CD4-positive, alpha-beta T cell (primary cell): ENCODE measurements at regions of chr6 and their contacts with region 1.

Region 1: GRCh38 chr6:26216356-26216885 is 129.2 kb downstream of the HFE start:
- DNase-seq: peak; percentile 52 to 98 (median 71)
- ATAC-seq: peak; percentile 80
- H3K4me3 ChIP-seq: peak overlapping the region; percentile 76
- H3K4me3 Mint-ChIP-seq: no peak overlapping the region
- H3K27ac ChIP-seq: peak overlapping the region; percentile 87 to 88
- H3K27ac Mint-ChIP-seq: no peak overlapping the region
- H3K4me1 ChIP-seq: peaks cover 33% of the 10 kb centered on the region
- H3K4me1 Mint-ChIP-seq: no peaks in the 10 kb centered on the region
- H3K27me3 ChIP-seq: no peaks in the 10 kb centered on the region
- H3K27me3 Mint-ChIP-seq: no peaks in the 10 kb centered on the region
- CTCF ChIP-seq: no peak

Region 2: DNA sequence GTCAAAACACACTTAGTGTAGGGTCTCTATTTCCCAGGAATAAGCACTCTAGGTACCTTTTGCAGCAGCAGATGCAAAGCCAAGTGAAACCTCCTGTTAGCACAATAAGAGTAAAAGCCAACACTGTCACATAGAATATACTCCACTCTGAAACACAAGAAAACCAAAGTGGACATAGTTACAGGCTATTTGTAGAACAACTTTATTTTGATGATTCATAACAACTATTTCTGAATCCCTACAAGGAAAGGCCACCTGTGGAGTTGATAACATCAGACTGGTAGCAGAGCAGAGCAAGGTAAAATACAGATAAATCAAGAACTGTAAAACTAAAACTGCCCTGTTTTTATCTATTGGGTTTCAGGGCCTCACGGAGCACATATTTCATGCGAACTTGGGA is 1661.9 kb before region 1 on chr6:
- CTCF ChIA-PET with region 1: no interaction called
- POLR2A ChIA-PET with region 1: no interaction called
- intact Hi-C with region 1: no loop called
- DNase-seq: no peak
- ATAC-seq: no peak
- H3K4me3 ChIP-seq: no peak overlapping the region
- H3K4me3 Mint-ChIP-seq: no peak overlapping the region
- H3K27ac ChIP-seq: no peak overlapping the region
- H3K27ac Mint-ChIP-seq: no peak overlapping the region
- H3K4me1 ChIP-seq: no peaks in the 10 kb centered on the region
- H3K4me1 Mint-ChIP-seq: no peaks in the 10 kb centered on the region
- H3K27me3 ChIP-seq: no peaks in the 10 kb centered on the region
- H3K27me3 Mint-ChIP-seq: no peaks in the 10 kb centered on the region
- CTCF ChIP-seq: no peak

Region 3: DNA sequence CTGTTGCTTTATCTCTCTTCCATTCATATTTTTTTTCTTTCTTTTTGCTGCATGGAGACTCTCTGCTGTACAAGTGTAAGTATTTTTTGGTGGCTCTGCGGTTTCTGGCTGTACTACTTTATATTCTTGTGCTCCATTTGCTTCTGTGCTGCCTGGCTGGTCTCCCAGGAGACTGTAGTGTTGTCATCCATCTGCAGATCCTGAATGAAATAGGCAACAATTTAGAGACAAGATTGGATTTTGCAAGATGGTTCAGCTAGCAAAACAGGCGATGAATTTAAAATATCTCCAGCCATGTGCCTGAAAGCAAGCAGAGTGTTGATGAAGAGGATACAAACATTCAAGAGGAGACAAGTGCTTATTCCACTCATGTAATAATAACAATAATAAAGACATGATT is 639.5 kb before region 1 on chr6:
- CTCF ChIA-PET with region 1: no interaction called
- POLR2A ChIA-PET with region 1: no interaction called
- intact Hi-C with region 1: no loop called
- DNase-seq: no peak
- ATAC-seq: no peak
- H3K4me3 ChIP-seq: no peak overlapping the region
- H3K4me3 Mint-ChIP-seq: no peak overlapping the region
- H3K27ac ChIP-seq: no peak overlapping the region
- H3K27ac Mint-ChIP-seq: no peak overlapping the region
- H3K4me1 ChIP-seq: peaks cover 5% of the 10 kb centered on the region
- H3K4me1 Mint-ChIP-seq: peaks cover 10% of the 10 kb centered on the region
- H3K27me3 ChIP-seq: no peaks in the 10 kb centered on the region
- H3K27me3 Mint-ChIP-seq: no peaks in the 10 kb centered on the region
- CTCF ChIP-seq: no peak

Region 4: GRCh38 chr6:26025894-26026832 is 190.3 kb before region 1 on chr6:
- CTCF ChIA-PET with region 1: no interaction called
- POLR2A ChIA-PET with region 1: interaction called, 44 read pairs
- intact Hi-C with region 1: no loop called
- DNase-seq: peak; percentile 75 to 98 (median 88)
- ATAC-seq: peak; percentile 45
- H3K4me3 ChIP-seq: peak overlapping the region; percentile 70
- H3K4me3 Mint-ChIP-seq: peak overlapping the region; percentile 90
- H3K27ac ChIP-seq: peak overlapping the region; percentile 86 to 88
- H3K27ac Mint-ChIP-seq: peak overlapping the region; percentile 97
- H3K4me1 ChIP-seq: peaks cover 34% of the 10 kb centered on the region
- H3K4me1 Mint-ChIP-seq: peaks cover 42% of the 10 kb centered on the region
- H3K27me3 ChIP-seq: no peaks in the 10 kb centered on the region
- H3K27me3 Mint-ChIP-seq: no peaks in the 10 kb centered on the region
- CTCF ChIP-seq: peak; percentile 86

Region 5: GRCh38 chr6:26122793-26123674 is 93.4 kb before region 1 on chr6:
- CTCF ChIA-PET with region 1: interaction called, 3 read pairs
- POLR2A ChIA-PET with region 1: interaction called, 306 read pairs
- intact Hi-C with region 1: loop called in 1 of 2 experiments (anchors 1 kb)
- DNase-seq: peak; percentile 75 to 98 (median 92)
- ATAC-seq: peak; percentile 56
- H3K4me3 ChIP-seq: peak overlapping the region; percentile 88
- H3K4me3 Mint-ChIP-seq: peak overlapping the region; percentile 97
- H3K27ac ChIP-seq: peak overlapping the region; percentile 84 to 95
- H3K27ac Mint-ChIP-seq: peak overlapping the region; percentile 98
- H3K4me1 ChIP-seq: peaks cover 23% of the 10 kb centered on the region
- H3K4me1 Mint-ChIP-seq: peaks cover 41% of the 10 kb centered on the region
- H3K27me3 ChIP-seq: no peaks in the 10 kb centered on the region
- H3K27me3 Mint-ChIP-seq: peaks cover 13% of the 10 kb centered on the region
- CTCF ChIP-seq: no peak

Region 6: DNA sequence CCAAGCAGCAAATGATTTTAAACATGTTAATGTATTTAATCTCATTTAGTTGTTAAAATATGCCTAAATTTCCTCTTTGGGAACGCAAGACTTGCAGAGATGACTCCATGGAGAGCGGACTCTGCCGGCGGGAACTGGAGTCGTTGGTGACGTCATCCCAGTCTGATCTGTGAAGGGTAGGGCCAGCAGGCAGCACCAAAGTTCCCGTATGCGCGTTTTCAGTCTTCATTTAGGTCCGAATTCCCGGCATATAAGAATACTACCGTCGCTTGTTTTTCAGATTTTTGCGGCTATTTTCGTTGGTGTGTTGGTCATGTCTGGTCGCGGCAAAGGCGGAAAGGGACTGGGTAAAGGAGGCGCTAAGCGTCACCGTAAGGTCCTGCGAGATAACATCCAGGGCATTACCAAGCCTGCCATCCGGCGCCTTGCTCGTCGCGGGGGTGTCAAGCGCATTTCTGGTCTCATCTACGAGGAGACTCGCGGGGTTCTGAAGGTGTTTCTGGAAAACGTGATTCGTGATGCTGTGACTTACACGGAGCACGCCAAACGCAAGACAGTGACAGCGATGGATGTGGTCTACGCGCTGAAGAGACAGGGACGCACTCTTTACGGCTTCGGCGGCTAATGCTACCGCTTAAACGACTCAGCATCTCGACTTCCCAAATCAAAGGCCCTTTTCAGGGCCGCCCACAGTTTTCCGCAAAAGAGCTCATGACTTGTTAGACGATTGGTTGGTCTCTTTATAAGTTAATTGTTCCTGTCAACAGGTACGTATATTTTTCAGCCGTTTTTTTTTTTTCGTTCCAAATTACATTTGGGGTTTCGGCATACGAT is 11.9 kb before region 1 on chr6:
- CTCF ChIA-PET with region 1: interaction called, 28 read pairs
- POLR2A ChIA-PET with region 1: interaction called, 1,838 read pairs
- intact Hi-C with region 1: loop called (anchors 1 kb)
- DNase-seq: peak; percentile 73 to 98 (median 80)
- ATAC-seq: peak; percentile 69
- H3K4me3 ChIP-seq: peak overlapping the region; percentile 68
- H3K4me3 Mint-ChIP-seq: no peak overlapping the region
- H3K27ac ChIP-seq: peak overlapping the region; percentile 89 to 90
- H3K27ac Mint-ChIP-seq: no peak overlapping the region
- H3K4me1 ChIP-seq: peaks cover 34% of the 10 kb centered on the region
- H3K4me1 Mint-ChIP-seq: peaks cover 8% of the 10 kb centered on the region
- H3K27me3 ChIP-seq: no peaks in the 10 kb centered on the region
- H3K27me3 Mint-ChIP-seq: no peaks in the 10 kb centered on the region
- CTCF ChIP-seq: peak; percentile 32

Region 7: DNA sequence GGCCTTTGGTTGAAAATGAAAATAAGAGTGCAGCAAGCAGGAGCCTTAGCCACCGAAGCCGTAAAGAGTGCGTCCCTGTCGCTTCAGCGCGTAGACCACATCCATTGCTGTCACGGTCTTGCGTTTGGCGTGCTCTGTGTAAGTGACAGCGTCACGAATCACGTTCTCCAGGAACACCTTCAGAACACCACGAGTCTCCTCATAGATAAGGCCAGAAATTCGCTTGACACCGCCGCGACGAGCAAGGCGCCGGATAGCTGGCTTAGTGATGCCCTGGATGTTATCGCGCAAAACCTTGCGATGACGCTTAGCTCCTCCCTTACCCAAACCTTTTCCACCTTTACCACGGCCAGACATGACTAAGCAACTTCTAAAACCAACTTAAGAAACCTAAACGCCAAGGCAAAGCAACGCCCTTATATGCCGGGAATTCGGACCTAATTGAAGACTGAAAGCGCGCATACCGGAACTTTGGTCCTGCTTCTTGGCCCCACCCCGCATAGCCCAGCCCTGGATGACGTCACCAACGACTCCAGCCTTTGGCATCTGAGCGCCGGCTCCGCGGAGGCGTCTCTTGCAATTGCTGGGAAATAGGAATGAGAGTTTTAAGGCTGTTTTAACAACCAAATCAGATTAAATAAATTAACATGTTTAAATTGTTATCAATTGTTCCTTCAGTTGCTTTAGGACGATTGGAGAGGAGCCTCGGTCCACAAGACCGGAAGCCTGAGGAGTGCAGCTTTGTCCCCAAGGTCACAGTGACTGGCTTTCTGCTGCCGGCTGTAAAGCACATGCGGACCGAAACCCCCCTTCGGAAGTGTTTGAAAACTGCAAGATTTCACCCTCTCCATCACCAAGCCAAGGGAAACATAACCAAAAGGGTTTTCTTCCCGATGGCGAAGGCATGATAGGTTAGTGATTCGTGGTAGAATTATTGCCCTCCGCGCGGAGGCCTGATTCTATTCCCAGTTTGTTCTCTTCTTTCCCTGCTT is 69.0 kb after region 1 on chr6:
- CTCF ChIA-PET with region 1: interaction called, 3 read pairs
- POLR2A ChIA-PET with region 1: interaction called, 137 read pairs
- intact Hi-C with region 1: loop called in 1 of 2 experiments (anchors 2 kb)
- DNase-seq: peak; percentile 85 to 99 (median 92)
- ATAC-seq: peak; percentile 82
- H3K4me3 ChIP-seq: peak overlapping the region; percentile 62
- H3K4me3 Mint-ChIP-seq: peak overlapping the region; percentile 87
- H3K27ac ChIP-seq: peak overlapping the region; percentile 82 to 85
- H3K27ac Mint-ChIP-seq: peak overlapping the region; percentile 96
- H3K4me1 ChIP-seq: peaks cover 16% of the 10 kb centered on the region
- H3K4me1 Mint-ChIP-seq: peaks cover 24% of the 10 kb centered on the region
- H3K27me3 ChIP-seq: no peaks in the 10 kb centered on the region
- H3K27me3 Mint-ChIP-seq: peaks cover 11% of the 10 kb centered on the region
- CTCF ChIP-seq: no peak

Region 8: DNA sequence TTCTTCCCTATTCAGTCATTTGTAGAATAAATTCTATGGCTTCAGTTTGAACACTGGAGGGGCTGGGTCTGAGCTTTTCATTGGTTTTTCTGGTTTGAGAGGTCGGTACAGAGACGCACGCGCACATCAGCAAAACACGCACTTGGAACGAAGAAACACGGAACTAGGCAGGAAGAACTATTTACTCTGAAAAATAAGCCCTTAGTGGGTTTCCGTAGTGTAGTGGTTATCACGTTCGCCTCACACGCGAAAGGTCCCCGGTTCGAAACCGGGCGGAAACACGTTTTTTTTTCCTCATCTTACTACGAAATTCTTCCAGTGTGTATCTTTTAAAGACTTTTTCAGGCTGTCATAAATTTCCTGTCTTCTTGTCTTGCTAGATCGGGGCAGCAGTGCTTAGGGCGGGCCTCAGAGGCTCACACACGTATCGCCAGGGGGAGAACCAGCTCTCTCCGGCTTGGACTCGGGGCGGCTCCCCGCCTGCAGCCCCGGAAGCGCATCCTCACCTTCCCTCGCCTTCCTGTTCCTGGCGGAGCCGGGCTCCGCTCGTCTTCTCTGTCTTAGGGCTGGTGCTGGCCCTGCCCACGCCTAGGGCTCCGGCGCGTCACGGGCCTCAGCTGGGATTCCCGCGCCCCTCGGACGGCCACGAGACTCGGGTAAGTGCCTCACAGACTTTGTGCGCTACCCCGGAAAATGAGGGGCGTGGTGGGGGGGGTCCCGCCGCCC is 321.6 kb after region 1 on chr6 and contains the start of gene HMGN4:
- CTCF ChIA-PET with region 1: no interaction called
- POLR2A ChIA-PET with region 1: interaction called, 16 read pairs
- intact Hi-C with region 1: no loop called
- DNase-seq: peak; percentile 66 to 97 (median 76)
- ATAC-seq: peak; percentile 70
- H3K4me3 ChIP-seq: peak within 1 kb of the TSS; percentile 93
- H3K4me3 Mint-ChIP-seq: peak within 1 kb of the TSS; percentile 94
- H3K27ac ChIP-seq: peak within 1 kb of the TSS; percentile 84 to 91
- H3K27ac Mint-ChIP-seq: peak within 1 kb of the TSS; percentile 98
- H3K4me1 ChIP-seq: peaks cover 51% of the 10 kb centered on the region
- H3K4me1 Mint-ChIP-seq: peaks cover 57% of the 10 kb centered on the region
- H3K27me3 ChIP-seq: no peaks in the 10 kb centered on the region
- H3K27me3 Mint-ChIP-seq: peaks cover 13% of the 10 kb centered on the region
- CTCF ChIP-seq: no peak
- total RNA-seq, gene HMGN4: 22.7 to 24.8 TPM

Region 9: GRCh38 chr6:27825025-27825793 is 1608.8 kb after region 1 on chr6:
- CTCF ChIA-PET with region 1: no interaction called
- POLR2A ChIA-PET with region 1: interaction called, 13 read pairs
- intact Hi-C with region 1: no loop called
- DNase-seq: peak in 2 of 14 experiments; percentile 27 to 38
- ATAC-seq: no peak
- H3K4me3 ChIP-seq: peak overlapping the region; percentile 82
- H3K4me3 Mint-ChIP-seq: peak overlapping the region; percentile 90
- H3K27ac ChIP-seq: peak overlapping the region; percentile 77 to 87
- H3K27ac Mint-ChIP-seq: peak overlapping the region; percentile 99
- H3K4me1 ChIP-seq: peaks cover 8% of the 10 kb centered on the region
- H3K4me1 Mint-ChIP-seq: peaks cover 38% of the 10 kb centered on the region
- H3K27me3 ChIP-seq: no peaks in the 10 kb centered on the region
- H3K27me3 Mint-ChIP-seq: no peaks in the 10 kb centered on the region
- CTCF ChIP-seq: no peak